CD4-positive, alpha-beta memory T cell (primary cell): ENCODE measurements at regions of chr3 and their contacts with region 1.

Region 1: GRCh38 chr3:155870133-155870944 is at the start of gene GMPS:
- DNase-seq: peak; percentile 93 to 98 (median 96)
- H3K4me3 ChIP-seq: peak within 1 kb of the TSS; percentile 74 to 96
- H3K4me3 Mint-ChIP-seq: peak within 1 kb of the TSS; percentile 93 to 100 (median 97)
- H3K27ac ChIP-seq: peak within 1 kb of the TSS; percentile 83
- H3K27ac Mint-ChIP-seq: peak within 1 kb of the TSS; percentile 95 to 99 (median 98)
- H3K4me1 ChIP-seq: peaks cover 36% of the 10 kb centered on the region
- H3K4me1 Mint-ChIP-seq: peaks cover 11 to 44% (median 25%) of the 10 kb centered on the region in 4 donors
- H3K27me3 ChIP-seq: no peaks in the 10 kb centered on the region
- H3K27me3 Mint-ChIP-seq: no peaks in the 10 kb centered on the region
- total RNA-seq, gene GMPS: 50.5 to 53.2 TPM

Region 2: GRCh38 chr3:155744626-155745324 is 125.6 kb before region 1 on chr3 and contains the start of gene PLCH1:
- CTCF ChIA-PET with region 1: no interaction called
- POLR2A ChIA-PET with region 1: no interaction called
- intact Hi-C with region 1: loop called (anchors 2 kb)
- DNase-seq: peak; percentile 37 to 56 (median 41)
- H3K4me3 ChIP-seq: peak within 1 kb of the TSS; percentile 63 to 76
- H3K4me3 Mint-ChIP-seq: peak within 1 kb of the TSS; percentile 89 to 95 (median 91)
- H3K27ac ChIP-seq: peak within 1 kb of the TSS; percentile 0
- H3K27ac Mint-ChIP-seq: peak within 1 kb of the TSS in 6 of 7 donors; percentile 50 to 83 (median 75)
- H3K4me1 ChIP-seq: peaks cover 22% of the 10 kb centered on the region
- H3K4me1 Mint-ChIP-seq: peaks cover 7 to 29% (median 14%) of the 10 kb centered on the region in 4 donors
- H3K27me3 ChIP-seq: peaks cover 18% of the 10 kb centered on the region
- H3K27me3 Mint-ChIP-seq: peaks cover 26 to 29% of the 10 kb centered on the region in 2 donors
- total RNA-seq, gene PLCH1: not detected

Region 3: DNA sequence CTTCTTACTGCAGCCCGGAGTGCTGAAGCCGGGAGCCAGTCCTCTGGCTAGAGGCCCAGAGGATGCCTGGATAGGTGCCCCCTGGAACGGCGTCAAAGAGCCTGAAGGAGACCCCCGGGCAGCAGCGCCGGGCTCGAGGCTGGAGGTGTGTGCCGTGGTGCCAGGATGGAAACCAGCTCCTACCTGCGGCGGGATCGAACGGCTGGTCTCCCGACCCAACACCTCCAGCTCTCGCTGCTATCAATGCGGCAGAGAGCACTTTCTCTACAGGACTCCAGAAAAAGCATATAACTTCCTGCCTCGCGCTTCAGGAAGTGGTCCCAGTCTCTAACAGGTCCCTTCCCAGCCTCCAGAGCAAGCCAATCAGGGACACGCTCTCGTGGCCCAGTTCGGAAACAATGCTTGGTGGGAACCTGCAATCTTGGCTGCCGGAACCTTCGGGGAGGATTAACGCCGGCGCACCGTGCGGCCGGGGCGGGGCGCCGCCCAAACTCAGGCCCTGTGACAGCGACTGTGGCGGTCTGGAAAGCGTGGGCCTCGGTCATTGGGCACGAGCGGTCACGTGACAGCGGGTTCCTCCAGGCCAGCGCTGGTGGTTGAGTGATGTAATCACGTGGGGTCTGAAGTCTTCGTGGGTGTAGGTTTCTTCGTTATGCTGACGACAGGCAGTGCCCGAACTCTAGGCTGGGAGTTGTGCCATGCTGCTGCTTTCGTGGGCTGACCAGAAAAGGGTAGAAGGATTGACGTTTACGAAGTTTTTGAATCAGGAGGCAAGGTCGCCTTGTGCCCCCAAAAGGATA is 16.0 kb before region 1 on chr3 and contains the start of gene SLC33A1:
- CTCF ChIA-PET with region 1: interaction called, 12 read pairs
- POLR2A ChIA-PET with region 1: interaction called, 61 read pairs
- intact Hi-C with region 1: loop called (anchors 1 kb)
- DNase-seq: peak; percentile 99
- H3K4me3 ChIP-seq: peak within 1 kb of the TSS; percentile 98
- H3K4me3 Mint-ChIP-seq: peak within 1 kb of the TSS; percentile 89 to 98 (median 96)
- H3K27ac ChIP-seq: peak within 1 kb of the TSS; percentile 77
- H3K27ac Mint-ChIP-seq: peak within 1 kb of the TSS; percentile 94 to 100 (median 99)
- H3K4me1 ChIP-seq: peaks cover 44% of the 10 kb centered on the region
- H3K4me1 Mint-ChIP-seq: peaks cover 27 to 58% (median 38%) of the 10 kb centered on the region in 4 donors
- H3K27me3 ChIP-seq: no peaks in the 10 kb centered on the region
- H3K27me3 Mint-ChIP-seq: no peaks in the 10 kb centered on the region
- total RNA-seq, gene SLC33A1: 44.9 to 45.8 TPM

Region 4: DNA sequence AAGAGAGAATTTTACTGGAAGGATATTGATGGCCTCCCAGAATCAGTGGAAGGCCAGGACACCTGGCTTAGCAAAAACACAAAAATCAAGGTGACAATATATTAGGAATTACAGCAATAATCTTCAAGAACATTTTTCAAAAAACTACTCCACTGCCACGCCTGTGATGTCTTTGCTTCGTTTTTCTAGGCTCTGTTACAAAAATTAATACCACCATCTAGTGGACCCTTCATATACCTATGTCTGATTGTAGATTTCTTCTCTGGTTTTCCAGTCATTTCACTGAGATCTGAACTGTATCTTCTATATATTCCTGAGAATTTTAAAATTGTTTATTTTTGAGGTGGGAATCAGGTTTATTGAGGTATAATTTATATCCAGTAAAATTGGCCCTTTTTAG is 10.5 kb before region 1 on chr3:
- CTCF ChIA-PET with region 1: interaction called, 8 read pairs
- POLR2A ChIA-PET with region 1: interaction called, 7 read pairs
- intact Hi-C with region 1: loop called (anchors 1 kb)
- DNase-seq: peak in 1 of 5 donors; percentile 10
- H3K4me3 ChIP-seq: no peak overlapping the region
- H3K4me3 Mint-ChIP-seq: no peak overlapping the region
- H3K27ac ChIP-seq: no peak overlapping the region
- H3K27ac Mint-ChIP-seq: peak overlapping the region in 3 of 7 donors; percentile 3 to 62 (median 4)
- H3K4me1 ChIP-seq: peaks cover 20% of the 10 kb centered on the region
- H3K4me1 Mint-ChIP-seq: peaks cover 8 to 31% (median 15%) of the 10 kb centered on the region in 4 donors
- H3K27me3 ChIP-seq: no peaks in the 10 kb centered on the region
- H3K27me3 Mint-ChIP-seq: no peaks in the 10 kb centered on the region

Region 5: DNA sequence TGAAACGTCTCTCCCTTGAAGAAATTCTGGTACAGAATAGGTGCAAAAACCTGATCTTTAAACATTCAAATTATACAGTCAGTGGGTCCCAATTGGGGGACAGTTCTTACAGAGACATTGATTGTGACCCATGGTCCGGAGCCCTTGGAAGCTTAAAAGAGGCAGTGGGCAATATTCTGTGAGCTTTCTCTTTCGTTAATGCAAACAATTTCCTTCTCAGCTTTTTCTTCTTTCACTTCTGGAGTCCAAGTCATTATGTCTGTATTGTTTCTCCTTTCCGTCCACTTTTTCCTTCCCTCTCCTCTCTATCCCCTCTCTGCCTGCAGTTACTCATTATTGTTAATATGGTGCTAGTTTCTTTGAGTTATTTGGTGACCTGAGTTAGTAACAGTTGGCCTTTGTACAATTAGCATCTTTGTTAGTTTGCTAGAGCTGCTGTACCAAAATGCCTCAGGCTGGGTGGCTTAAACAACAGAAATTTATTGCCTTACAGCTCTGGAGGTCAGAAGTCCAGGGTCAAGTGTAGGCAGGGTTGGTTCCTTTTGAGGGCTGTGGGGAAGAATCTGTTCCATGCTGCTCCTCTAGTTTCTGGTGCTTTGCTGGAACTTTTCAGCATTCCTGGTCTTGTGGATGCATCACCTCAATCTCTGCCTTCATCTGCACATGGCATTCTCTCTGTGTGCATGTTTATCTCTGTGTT is 102.7 kb after region 1 on chr3:
- CTCF ChIA-PET with region 1: no interaction called
- POLR2A ChIA-PET with region 1: no interaction called
- intact Hi-C with region 1: no loop called
- DNase-seq: no peak
- H3K4me3 ChIP-seq: no peak overlapping the region
- H3K4me3 Mint-ChIP-seq: no peak overlapping the region
- H3K27ac ChIP-seq: no peak overlapping the region
- H3K27ac Mint-ChIP-seq: no peak overlapping the region
- H3K4me1 ChIP-seq: no peaks in the 10 kb centered on the region
- H3K4me1 Mint-ChIP-seq: no peaks in the 10 kb centered on the region
- H3K27me3 ChIP-seq: no peaks in the 10 kb centered on the region
- H3K27me3 Mint-ChIP-seq: peaks cover 1 to 2% of the 10 kb centered on the region in 2 donors